ENCODE measurements at regions of chr12 and their contacts with region 1.

Region 1: DNA sequence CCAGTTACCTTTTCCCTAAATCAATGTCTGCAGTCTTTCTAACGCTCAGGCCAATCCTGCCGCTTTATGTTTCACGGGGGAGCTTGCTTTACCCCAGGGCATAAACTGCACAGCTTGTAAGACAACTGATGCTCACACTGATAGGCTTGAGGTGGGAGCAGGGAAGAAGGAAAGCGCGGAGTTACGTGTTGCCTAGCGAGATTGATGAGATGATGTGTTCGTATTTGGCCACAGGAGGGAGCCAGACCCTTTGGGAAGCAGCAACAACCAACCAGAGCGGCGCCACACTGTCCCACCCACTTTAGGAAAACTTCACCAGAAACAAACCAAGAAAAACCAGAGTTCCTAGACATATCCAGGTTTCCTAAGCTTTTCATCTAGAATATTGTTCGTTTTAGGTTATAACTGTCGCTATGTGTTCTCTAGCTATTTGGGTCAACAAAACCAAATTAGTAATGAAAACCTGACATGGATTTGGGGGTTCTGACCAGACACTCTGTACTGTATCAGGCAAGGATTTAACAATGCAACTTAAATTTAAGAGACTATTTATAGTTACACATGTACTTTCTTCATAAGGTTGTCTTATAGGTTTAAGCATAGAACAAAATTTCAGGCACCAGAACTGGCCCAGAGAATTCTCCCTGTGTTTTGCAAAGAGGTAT is 2.4 kb downstream of the IL26 start:
- DNase-seq: peak; percentile 88
- H3K4me3 ChIP-seq: no peak overlapping the region
- H3K27ac ChIP-seq: no peak overlapping the region
- H3K4me1 ChIP-seq: no peaks in the 10 kb centered on the region
- H3K27me3 ChIP-seq: peaks cover 34% of the 10 kb centered on the region
- CTCF ChIP-seq: peak; percentile 90

Region 2: DNA sequence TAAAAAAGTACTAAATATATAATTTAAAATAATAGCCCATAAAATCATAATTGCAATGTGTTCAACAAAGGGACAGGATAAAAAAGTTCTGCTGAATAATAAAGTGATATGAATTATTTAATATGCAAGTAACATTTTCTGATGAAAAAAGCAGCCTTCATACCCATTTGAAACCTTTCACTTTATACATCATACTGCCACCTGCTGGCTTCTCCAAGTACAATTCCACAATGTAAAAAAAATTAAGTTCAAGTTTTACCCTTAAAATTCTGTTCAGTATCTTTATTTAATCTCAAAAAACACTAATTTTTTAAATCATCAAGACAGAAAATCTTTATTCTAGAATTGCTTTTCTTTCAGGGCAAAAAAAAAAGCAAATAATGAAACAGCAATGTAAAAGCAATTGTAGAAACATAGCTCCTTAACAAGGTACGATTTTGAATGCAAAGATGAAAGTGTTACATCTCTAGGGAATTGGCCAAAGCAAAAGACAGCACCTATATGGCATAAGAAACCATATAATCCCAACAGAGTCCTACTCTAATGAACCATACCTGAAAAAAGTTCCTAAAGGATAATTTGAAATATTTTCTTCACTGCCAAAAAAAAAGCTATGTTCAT is 93.9 kb after region 1 on chr12:
- CTCF ChIA-PET with region 1: interaction called, 8 read pairs
- POLR2A ChIA-PET with region 1: no interaction called
- intact Hi-C with region 1: loop called (anchors 1 kb)
- DNase-seq: peak; percentile 61
- H3K4me3 ChIP-seq: no peak overlapping the region
- H3K27ac ChIP-seq: no peak overlapping the region
- H3K4me1 ChIP-seq: peaks cover 3% of the 10 kb centered on the region
- H3K27me3 ChIP-seq: no peaks in the 10 kb centered on the region
- CTCF ChIP-seq: peak; percentile 70

Region 3: DNA sequence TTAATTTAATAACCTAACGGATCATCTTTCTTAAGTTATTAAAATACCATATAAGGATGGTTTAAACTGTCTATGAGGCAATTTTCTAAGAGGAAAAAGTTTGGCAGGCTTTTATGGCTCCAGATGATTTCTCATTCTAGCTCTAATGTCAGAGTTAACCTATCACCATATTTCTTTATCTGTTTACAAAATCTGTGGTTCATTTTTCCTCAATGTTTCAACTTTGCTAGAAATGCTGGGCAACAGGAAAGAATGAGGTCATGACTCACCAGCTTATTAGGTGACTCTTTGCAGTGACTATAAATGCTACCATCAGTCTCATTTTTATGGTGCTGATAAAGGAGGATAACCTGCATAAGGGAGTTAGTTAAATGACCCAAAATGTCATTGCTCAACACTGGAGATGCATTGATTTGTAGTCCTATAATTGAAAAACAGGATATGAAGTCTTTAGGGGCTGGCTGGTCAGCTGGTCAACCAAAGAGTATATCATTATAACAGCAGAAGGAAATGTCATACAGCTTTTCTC is 342.2 kb after region 1 on chr12:
- CTCF ChIA-PET with region 1: no interaction called
- POLR2A ChIA-PET with region 1: no interaction called
- intact Hi-C with region 1: no loop called
- DNase-seq: peak; percentile 18
- H3K4me3 ChIP-seq: no peak overlapping the region
- H3K27ac ChIP-seq: no peak overlapping the region
- H3K4me1 ChIP-seq: no peaks in the 10 kb centered on the region
- H3K27me3 ChIP-seq: no peaks in the 10 kb centered on the region
- CTCF ChIP-seq: no peak

Measured in A673 (cell line).